Cardiac septum (tissue), 1 donor: ENCODE measurements at regions of chr6 and their contacts with region 1.

Region 1: DNA sequence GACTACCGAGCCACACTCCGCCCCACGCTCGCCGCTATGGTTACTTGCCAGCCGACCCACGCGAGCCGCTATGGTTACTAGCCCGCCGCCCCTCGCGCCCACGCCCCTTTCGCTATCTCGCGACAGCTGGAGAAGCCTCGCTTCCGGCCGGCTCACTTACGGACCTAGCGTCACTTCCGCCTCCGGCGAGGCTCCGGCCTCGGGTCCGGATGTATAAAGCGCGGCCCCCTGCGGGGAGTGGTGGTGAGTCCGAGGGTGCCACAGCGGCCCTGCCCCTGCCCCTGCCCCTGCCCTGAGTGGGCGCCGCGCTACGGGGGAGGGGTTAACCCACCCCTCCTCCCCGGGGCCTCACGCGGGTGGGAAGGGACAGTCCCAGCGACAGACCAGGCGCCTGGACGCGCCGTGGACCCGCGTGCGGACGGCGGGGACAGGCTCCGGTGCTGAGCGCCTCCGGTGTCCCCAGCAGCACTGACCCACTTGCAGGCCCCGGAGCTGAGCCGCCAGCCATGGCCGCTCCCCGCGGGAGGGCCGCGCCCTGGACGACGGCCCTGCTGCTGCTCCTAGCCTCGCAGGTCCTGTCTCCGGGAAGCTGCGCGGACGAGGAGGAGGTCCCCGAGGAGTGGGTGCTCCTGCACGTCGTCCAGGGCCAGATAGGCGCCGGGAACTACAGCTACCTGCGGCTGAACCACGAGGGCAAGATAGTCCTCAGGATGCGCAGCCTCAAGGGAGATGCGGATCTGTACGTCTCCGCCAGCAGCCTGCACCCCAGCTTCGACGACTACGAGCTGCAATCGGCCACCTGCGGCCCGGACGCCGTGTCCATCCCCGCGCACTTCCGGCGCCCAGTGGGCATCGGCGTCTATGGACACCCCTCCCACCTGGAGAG is at the starts of genes C6orf120 and WDR27:
- DNase-seq: peak; percentile 97
- total RNA-seq, gene C6orf120: 13.6 TPM
- total RNA-seq, gene WDR27: 7.2 TPM

Region 2: GRCh38 chr6:169654598-169655391 is 47.4 kb before region 1 on chr6:
- intact Hi-C with region 1: no loop called
- DNase-seq: no peak

Region 3: DNA sequence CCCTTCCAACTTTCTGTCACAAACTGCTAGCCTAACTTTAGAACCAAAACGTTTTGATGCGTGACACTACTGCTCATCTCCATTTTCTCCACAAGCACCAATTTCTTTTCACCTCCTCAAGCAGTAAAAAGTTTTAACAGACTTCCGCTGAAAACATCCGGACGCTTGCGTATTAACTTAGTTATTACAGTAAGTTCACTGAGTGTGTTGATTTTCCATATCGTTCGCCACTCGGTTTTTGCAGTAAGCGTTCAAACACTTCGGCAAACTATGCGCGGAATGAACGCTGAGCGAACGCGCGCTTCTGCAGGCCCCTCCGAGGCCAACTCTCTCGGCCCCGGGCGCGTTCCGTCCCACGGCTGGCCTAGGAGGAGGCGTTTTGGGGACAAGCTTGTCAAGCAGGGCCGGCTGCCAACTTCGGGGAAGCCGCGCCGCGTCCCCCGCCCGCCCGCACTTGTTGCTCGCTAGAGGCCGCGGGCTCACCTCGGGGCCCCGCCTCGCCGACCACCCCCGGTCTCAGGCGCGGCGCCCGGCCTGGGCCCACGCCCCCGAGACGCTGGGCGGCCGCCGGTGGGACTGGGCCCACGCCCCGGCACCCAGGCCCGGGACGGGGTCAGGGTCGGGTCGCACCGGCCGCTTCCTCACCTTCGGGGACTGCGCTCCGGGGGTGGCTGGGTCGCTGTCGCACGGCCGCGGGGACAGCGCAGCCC is 21.2 kb after region 1 on chr6:
- intact Hi-C with region 1: loop called (anchors 2 kb)
- DNase-seq: peak; percentile 89

Region 4: DNA sequence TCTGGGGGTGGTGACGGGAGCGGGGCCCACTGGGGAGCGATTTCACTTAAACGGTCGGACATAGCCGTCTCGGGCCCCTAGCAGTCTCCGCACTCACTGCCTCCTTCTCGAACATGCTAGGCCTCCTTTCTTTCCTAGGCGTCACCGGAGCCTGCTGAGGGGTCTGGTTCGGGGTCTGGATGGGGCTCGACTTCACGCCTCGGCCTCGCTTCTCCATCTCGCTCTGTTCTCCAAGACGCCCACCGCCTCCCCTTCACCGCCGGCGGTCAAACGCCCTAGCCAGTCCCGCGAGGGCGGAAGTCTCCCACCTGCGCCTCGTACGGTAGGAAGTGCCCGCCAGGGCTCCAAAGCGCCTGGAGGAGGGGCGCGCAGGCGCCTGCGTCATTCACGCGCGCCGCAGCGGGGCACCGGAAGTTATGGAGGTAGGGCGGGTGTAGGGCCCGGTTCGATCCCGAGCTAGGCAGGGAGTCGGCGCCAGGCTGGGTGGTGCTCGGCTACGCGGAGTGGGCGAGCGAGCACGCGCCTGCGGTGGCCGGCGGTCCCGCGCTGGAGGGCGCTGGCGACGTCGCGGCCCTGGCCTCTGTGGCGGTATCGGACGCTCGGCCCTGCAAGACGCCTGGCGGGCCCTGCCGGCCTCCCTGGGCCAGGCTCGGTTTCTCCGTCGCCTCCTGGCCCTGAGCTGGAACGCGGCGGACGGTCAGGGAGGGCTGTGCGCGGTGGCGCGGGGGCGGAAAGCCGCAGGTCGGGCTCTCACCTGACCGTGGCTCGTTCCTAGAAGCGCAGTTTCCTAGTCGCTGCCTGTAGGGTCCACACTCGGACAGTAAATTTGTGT is 49.3 kb after region 1 on chr6 and contains the starts of genes DYNLT2 and ERMARD:
- intact Hi-C with region 1: loop called (anchors 2 kb)
- DNase-seq: peak; percentile 96
- total RNA-seq, gene DYNLT2: 0.83 TPM
- total RNA-seq, gene ERMARD: 11.3 TPM

Region 5: GRCh38 chr6:169763308-169763707 is 61.1 kb after region 1 on chr6:
- intact Hi-C with region 1: loop called (anchors 2 kb)
- DNase-seq: no peak